ENCODE measurements at regions of chr5 and their contacts with region 1.

Region 1: GRCh38 chr5:157328277-157328912 is 62.5 kb downstream of the CYFIP2 start:
- DNase-seq: peak; percentile 58
- H3K4me3 Mint-ChIP-seq: no peak overlapping the region
- H3K27ac Mint-ChIP-seq: peak overlapping the region; percentile 77
- H3K4me1 Mint-ChIP-seq: peaks cover 22% of the 10 kb centered on the region
- H3K27me3 Mint-ChIP-seq: no peaks in the 10 kb centered on the region

Region 2: DNA sequence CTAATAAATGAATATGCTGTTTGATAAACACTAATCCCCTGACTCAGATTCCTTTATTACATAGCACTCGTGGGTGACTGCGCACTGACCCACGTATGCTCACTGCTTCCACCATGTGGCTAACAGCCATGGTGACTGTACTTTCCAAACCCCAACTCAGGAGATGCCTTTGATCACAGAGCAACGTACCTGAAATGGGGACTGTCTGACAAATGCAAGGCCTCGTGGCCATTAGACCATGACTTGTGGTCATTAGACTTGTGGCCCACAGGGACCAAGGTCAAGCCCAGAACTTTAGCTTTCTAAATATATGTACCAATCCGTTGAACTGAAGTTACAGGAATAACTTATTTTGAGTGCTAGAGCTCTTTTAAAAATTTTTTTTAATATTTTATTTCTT is 15.9 kb before region 1 on chr5:
- CTCF ChIA-PET with region 1: interaction called, 29 read pairs
- POLR2A ChIA-PET with region 1: interaction called, 3 read pairs
- DNase-seq: peak; percentile 68
- H3K4me3 Mint-ChIP-seq: no peak overlapping the region
- H3K27ac Mint-ChIP-seq: peak overlapping the region; percentile 37
- H3K4me1 Mint-ChIP-seq: peaks cover 30% of the 10 kb centered on the region
- H3K27me3 Mint-ChIP-seq: no peaks in the 10 kb centered on the region

Region 3: GRCh38 chr5:157362982-157363381 is 34.6 kb after region 1 on chr5:
- CTCF ChIA-PET with region 1: interaction called, 10 read pairs
- POLR2A ChIA-PET with region 1: no interaction called
- DNase-seq: no peak
- H3K4me3 Mint-ChIP-seq: no peak overlapping the region
- H3K27ac Mint-ChIP-seq: no peak overlapping the region
- H3K4me1 Mint-ChIP-seq: no peaks in the 10 kb centered on the region
- H3K27me3 Mint-ChIP-seq: no peaks in the 10 kb centered on the region